Activated T-helper 1 cell treated with anti-CD3 and anti-CD28 coated beads, Interleukin-12 subunit alpha, Interleukin-12 subunit beta, Interleukin-2, Interleukin-4 antibody, amounts not matched to agents 30 ng/mL and 10 ng/mL and 1 ng/mL, durations not matched to agents 14 hours and 24 hours and 36 hours (primary cell): ENCODE measurements at regions of chr22 and their contacts with region 1.

Region 1: DNA sequence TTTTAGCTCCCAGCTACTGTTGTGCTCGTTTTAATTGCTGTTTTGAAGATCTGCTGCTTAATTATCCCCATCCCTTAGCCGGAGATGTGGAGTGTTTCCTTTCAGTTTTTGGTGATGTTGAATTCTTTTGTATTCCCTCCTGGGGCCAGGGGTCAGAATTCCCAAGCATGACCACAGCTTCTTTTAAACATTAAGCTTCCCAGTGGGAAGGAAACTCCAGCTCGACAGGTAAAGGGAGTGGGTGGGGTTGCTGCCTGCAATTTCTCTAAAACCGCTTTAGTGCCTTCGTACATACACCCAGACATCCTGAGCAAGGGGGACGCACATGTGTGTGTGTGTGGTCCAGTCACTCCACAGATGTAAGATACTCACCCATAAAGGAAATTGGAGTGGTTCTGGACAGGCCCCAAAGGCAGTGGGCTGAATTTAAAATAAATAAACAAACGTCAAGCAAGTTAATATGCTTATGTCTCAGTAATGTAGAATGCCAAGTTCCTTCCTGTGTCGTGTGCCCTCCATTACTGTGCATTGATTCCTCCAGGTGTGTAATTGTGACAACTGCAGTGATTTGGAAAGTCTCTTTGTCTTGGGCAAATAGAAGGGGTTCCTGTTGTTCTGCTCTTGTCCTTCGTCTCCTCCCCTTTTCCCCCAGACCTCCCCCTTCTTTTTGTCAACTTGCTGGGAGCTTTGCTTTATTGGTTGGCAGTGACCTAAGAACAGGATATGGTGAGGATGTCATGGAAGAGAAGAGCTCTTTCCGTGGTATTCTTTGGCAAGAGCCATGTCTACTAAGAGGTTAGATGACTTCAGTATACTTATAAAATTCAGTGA is 19.2 kb upstream of the ADSL start:
- DNase-seq: no peak
- H3K4me3 Mint-ChIP-seq: peak overlapping the region; percentile 29
- H3K27ac Mint-ChIP-seq: peak overlapping the region; percentile 80
- H3K4me1 Mint-ChIP-seq: peaks cover 90% of the 10 kb centered on the region
- H3K27me3 Mint-ChIP-seq: no peaks in the 10 kb centered on the region

Region 2: GRCh38 chr22:40070701-40071100 is 256.4 kb before region 1 on chr22:
- intact Hi-C with region 1: no loop called
- DNase-seq: no peak
- H3K4me3 Mint-ChIP-seq: no peak overlapping the region
- H3K27ac Mint-ChIP-seq: no peak overlapping the region
- H3K4me1 Mint-ChIP-seq: peaks cover 6% of the 10 kb centered on the region
- H3K27me3 Mint-ChIP-seq: no peaks in the 10 kb centered on the region

Region 3: GRCh38 chr22:40203572-40203971 is 123.5 kb before region 1 on chr22:
- intact Hi-C with region 1: loop called (anchors 5 kb)
- DNase-seq: peak; percentile 38
- H3K4me3 Mint-ChIP-seq: peak overlapping the region; percentile 36
- H3K27ac Mint-ChIP-seq: peak overlapping the region; percentile 76
- H3K4me1 Mint-ChIP-seq: peaks cover 49% of the 10 kb centered on the region
- H3K27me3 Mint-ChIP-seq: no peaks in the 10 kb centered on the region

Region 4: GRCh38 chr22:40250608-40251007 is 76.5 kb before region 1 on chr22:
- intact Hi-C with region 1: loop called (anchors 2 kb)
- DNase-seq: no peak
- H3K4me3 Mint-ChIP-seq: no peak overlapping the region
- H3K27ac Mint-ChIP-seq: peak overlapping the region; percentile 10
- H3K4me1 Mint-ChIP-seq: peaks cover 58% of the 10 kb centered on the region
- H3K27me3 Mint-ChIP-seq: no peaks in the 10 kb centered on the region

Region 5: GRCh38 chr22:40300884-40301672 is 26.0 kb before region 1 on chr22:
- intact Hi-C with region 1: loop called (anchors 1 kb)
- DNase-seq: no peak
- H3K4me3 Mint-ChIP-seq: no peak overlapping the region
- H3K27ac Mint-ChIP-seq: no peak overlapping the region
- H3K4me1 Mint-ChIP-seq: peaks cover 15% of the 10 kb centered on the region
- H3K27me3 Mint-ChIP-seq: no peaks in the 10 kb centered on the region

Region 6: DNA sequence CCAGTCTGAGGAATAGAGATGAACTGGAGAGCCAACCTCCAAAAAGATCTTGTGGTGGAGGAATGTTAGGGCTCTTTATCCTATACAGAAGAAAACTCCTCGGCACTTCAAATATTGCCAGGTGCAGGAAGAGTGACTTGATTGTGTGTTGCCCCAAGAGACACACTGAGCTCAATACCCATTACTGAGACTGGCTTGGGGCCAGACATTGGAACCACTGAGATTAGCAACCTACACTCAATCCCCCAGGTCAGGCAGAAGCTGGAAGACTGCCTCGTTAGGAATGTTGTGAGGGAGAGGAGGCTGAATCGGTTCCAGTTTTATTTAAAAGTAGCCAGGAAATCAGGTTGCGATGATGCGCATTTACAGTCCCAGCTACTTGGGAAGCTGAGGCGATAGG is 40.9 kb after region 1 on chr22:
- intact Hi-C with region 1: loop called (anchors 2 kb)
- DNase-seq: no peak
- H3K4me3 Mint-ChIP-seq: no peak overlapping the region
- H3K27ac Mint-ChIP-seq: no peak overlapping the region
- H3K4me1 Mint-ChIP-seq: peaks cover 16% of the 10 kb centered on the region
- H3K27me3 Mint-ChIP-seq: no peaks in the 10 kb centered on the region

Region 7: DNA sequence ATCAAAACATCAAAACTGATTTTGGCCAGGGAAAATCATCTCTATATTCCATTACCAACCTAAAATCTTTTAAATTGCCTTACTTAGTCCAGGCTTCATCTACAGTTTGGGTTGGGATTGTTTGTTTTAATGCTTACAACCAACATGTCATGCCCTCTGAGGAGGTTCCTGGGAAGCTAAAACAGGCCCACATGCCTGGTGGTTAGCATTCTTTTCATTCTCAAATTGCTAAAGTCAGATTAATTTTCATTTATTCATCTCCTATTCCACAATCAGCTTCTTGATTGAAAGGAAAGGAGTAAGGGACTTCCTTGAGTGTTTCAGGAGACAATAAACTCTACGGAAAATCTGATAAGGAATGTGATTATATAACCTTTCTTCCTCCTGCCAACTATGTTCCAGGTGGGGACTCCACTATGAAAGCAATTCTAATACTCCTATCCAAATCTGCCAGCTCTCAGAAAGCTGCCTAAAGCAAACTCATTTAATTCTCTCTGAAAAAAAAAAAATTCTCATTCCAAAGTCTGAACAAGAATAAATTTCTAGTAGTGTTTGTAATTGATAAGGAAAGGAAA is 278.6 kb after region 1 on chr22:
- intact Hi-C with region 1: no loop called
- DNase-seq: no peak
- H3K4me3 Mint-ChIP-seq: no peak overlapping the region
- H3K27ac Mint-ChIP-seq: no peak overlapping the region
- H3K4me1 Mint-ChIP-seq: peaks cover 28% of the 10 kb centered on the region
- H3K27me3 Mint-ChIP-seq: no peaks in the 10 kb centered on the region